OCI-LY7 (cell line): ENCODE measurements at regions of chr10 and their contacts with region 1.

Region 1: GRCh38 chr10:102904346-102904745 is 13.7 kb upstream of the CNNM2 start:
- DNase-seq: no peak
- H3K4me3 ChIP-seq: no peak overlapping the region
- H3K27ac ChIP-seq: no peak overlapping the region
- H3K4me1 ChIP-seq: no peaks in the 10 kb centered on the region
- CTCF ChIP-seq: no peak

Region 2: GRCh38 chr10:102729029-102730026 is 175.0 kb before region 1 on chr10:
- CTCF ChIA-PET with region 1: no interaction called
- POLR2A ChIA-PET with region 1: no interaction called
- intact Hi-C with region 1: loop called (anchors 1 kb)
- DNase-seq: no peak
- H3K4me3 ChIP-seq: no peak overlapping the region
- H3K27ac ChIP-seq: no peak overlapping the region
- H3K4me1 ChIP-seq: no peaks in the 10 kb centered on the region
- CTCF ChIP-seq: peak; percentile 75

Region 3: DNA sequence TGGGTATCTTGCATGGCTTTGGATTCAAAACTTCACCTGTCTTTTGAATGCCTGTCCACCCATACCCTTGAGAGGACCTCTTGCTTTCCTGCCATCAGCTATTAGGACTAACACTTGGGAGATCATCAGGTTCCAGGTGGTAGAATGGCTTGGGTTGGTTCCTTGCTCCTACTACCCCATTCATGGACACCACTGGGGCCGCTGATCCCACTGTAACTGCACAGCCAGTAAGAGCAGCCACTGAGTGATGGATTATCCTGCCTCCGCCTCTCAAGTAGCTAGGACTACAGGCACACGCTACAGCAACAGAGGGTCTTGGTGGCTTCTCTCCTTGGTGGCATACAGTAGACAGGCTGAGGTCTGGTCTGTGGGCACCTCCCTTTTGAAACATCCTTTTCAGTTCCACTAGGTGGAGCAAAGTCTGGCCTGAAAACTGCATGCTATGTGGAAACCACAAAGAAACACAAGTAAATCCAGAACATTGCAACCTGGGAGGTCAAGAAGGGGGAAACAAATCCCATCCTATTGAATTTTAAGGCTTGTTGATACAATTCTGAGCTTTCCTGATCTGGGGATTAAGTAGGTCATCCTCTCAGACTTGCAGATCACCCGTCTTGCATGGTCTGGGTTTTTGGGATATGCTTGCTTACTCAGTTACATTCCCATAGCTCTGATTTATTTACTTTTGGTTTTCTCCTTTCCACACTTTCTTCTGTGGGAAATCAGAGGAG is 151.2 kb before region 1 on chr10:
- CTCF ChIA-PET with region 1: no interaction called
- POLR2A ChIA-PET with region 1: no interaction called
- intact Hi-C with region 1: loop called (anchors 2 kb)
- DNase-seq: peak; percentile 56
- H3K4me3 ChIP-seq: no peak overlapping the region
- H3K27ac ChIP-seq: no peak overlapping the region
- H3K4me1 ChIP-seq: peaks cover 4% of the 10 kb centered on the region
- CTCF ChIP-seq: peak; percentile 83

Region 4: DNA sequence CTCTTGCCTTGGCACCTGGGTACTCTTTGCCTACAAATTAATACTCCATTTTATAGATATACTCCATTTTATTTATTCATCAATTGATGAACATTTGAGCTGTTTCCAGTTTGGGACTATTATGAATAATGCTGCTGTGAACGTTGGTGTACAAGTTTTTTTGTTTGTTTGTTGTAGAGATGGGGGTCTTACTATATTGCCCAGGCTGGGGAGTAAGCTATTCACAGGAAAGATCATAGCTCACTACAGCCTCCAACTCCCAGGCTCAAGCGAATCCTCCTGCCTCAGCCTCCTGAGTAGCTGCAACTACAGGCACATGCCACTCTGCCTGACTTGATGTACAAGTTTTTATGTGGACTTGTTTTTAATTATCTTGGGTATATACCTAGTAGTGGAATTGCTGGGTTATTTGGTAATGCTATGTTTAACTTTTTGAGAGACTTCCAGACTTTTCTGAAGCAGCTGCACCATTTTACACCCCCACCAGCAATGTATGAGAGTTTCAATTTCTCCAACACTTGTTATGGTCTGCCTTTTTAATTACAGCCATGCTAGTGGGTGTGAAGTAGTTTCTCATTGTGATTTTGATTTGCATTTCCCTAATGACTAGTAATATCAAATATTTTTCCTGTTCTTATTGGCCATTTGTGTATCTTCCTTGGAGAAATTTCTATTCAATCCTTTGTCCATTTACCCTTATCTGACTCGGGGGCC is 144.7 kb before region 1 on chr10:
- CTCF ChIA-PET with region 1: no interaction called
- POLR2A ChIA-PET with region 1: interaction called, 14 read pairs
- intact Hi-C with region 1: no loop called
- DNase-seq: no peak
- H3K4me3 ChIP-seq: no peak overlapping the region
- H3K27ac ChIP-seq: no peak overlapping the region
- H3K4me1 ChIP-seq: peaks cover 4% of the 10 kb centered on the region
- CTCF ChIP-seq: no peak

Region 5: DNA sequence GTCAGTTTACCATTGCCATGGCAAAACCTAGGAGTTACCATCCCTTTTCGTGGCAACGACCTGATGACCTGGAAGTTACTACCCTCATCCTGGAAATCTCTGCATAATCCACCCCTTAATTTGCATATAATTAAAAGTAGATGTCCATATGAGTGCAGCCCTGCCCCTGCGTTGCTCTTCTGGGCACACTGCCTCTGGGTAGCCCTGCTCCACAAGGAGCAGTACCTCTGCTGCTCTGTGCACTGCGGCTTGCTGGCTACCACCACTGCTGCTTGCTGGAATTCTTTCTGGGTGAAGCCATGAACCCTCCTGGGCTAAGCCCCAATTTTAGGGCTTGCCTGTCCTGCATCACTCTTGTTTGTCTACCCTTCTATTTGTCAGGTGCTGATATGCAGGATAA is 79.7 kb before region 1 on chr10:
- CTCF ChIA-PET with region 1: no interaction called
- POLR2A ChIA-PET with region 1: no interaction called
- intact Hi-C with region 1: no loop called
- DNase-seq: no peak
- H3K4me3 ChIP-seq: no peak overlapping the region
- H3K27ac ChIP-seq: no peak overlapping the region
- H3K4me1 ChIP-seq: no peaks in the 10 kb centered on the region
- CTCF ChIP-seq: no peak

Region 6: DNA sequence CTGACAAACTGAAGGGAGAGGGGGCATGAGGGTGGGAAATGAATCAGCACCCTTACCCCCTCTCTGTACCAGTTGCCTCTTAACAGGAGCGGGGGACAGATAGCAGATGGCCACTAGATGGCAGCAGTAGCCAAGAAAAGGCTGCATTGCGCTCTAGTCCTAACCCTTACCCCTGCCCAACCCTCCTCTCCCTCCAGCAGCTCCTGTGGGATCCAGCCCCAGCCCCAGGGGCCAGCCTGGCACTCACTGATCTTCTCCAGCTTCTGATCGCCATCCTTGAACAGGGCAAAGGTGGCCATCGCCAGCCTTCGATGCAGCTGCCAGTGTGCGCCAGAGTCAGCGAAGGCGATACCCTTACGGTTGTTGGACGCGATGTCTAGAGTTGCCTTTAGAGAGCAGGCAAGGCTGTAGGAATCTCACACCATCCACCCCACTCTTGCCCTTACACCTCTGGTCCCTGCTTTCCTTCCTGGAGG is 69.3 kb before region 1 on chr10:
- CTCF ChIA-PET with region 1: interaction called, 4 read pairs
- POLR2A ChIA-PET with region 1: interaction called, 5 read pairs
- intact Hi-C with region 1: loop called (anchors 1 kb)
- DNase-seq: peak; percentile 80
- H3K4me3 ChIP-seq: no peak overlapping the region
- H3K27ac ChIP-seq: no peak overlapping the region
- H3K4me1 ChIP-seq: no peaks in the 10 kb centered on the region
- CTCF ChIP-seq: peak; percentile 91